Right lobe of liver (tissue), 6 donors: ENCODE measurements at regions of chr2 and their contacts with region 1.

Region 1: GRCh38 chr2:68487773-68488355 is 20.5 kb downstream of the APLF start:
- DNase-seq: no peak
- ATAC-seq: peak; percentile 67 to 78 (median 74)
- H3K4me3 ChIP-seq: no peak overlapping the region
- H3K27ac ChIP-seq: peak overlapping the region in 1 of 3 donors; percentile 38
- H3K4me1 ChIP-seq: peaks cover 0 to 28% (median 6%) of the 10 kb centered on the region in 4 donors
- H3K27me3 ChIP-seq: no peaks in the 10 kb centered on the region
- CTCF ChIP-seq: peak; percentile 61 to 72 (median 63)
- POLR2A ChIP-seq: no peak

Region 2: GRCh38 chr2:68643011-68643873 is 155.4 kb after region 1 on chr2 and contains the start of gene PROKR1:
- intact Hi-C with region 1: loop called in 1 of 2 experiments (anchors 10 kb)
- DNase-seq: peak; percentile 71 to 77 (median 76)
- ATAC-seq: peak; percentile 91 to 96 (median 96)
- H3K4me3 ChIP-seq: peak within 1 kb of the TSS; percentile 54 to 58 (median 56)
- H3K27ac ChIP-seq: no peak within 1 kb of the TSS
- H3K4me1 ChIP-seq: no peaks in the 10 kb centered on the region
- H3K27me3 ChIP-seq: no peaks in the 10 kb centered on the region
- CTCF ChIP-seq: no peak
- POLR2A ChIP-seq: no peak
- total RNA-seq, gene PROKR1: not detected

Region 3: GRCh38 chr2:68909793-68910674 is 422.2 kb after region 1 on chr2:
- intact Hi-C with region 1: loop called in 1 of 2 experiments (anchors 10 kb)
- DNase-seq: peak in 2 of 3 donors; percentile 48 to 64
- ATAC-seq: peak; percentile 69 to 77 (median 74)
- H3K4me3 ChIP-seq: no peak overlapping the region
- H3K27ac ChIP-seq: no peak overlapping the region
- H3K4me1 ChIP-seq: peaks cover 0 to 11% (median 0%) of the 10 kb centered on the region in 4 donors
- H3K27me3 ChIP-seq: no peaks in the 10 kb centered on the region
- CTCF ChIP-seq: peak; percentile 75 to 90 (median 87)
- POLR2A ChIP-seq: no peak